PC-3 (cell line): ENCODE measurements at regions of chr11 and their contacts with region 1.

Region 1: GRCh38 chr11:94519478-94520084 is 7.3 kb downstream of the C11orf97 start:
- DNase-seq: peak; percentile 76
- ATAC-seq: peak; percentile 64
- H3K4me3 ChIP-seq: no peak overlapping the region; the same call in 1 of the 2 replicates
- H3K27ac ChIP-seq: no peak overlapping the region
- H3K4me1 ChIP-seq: no peaks in the 10 kb centered on the region
- H3K27me3 ChIP-seq: no peaks in the 10 kb centered on the region
- CTCF ChIP-seq: peak; percentile 86

Region 2: GRCh38 chr11:94417386-94417987 is 102.1 kb before region 1 on chr11:
- CTCF ChIA-PET with region 1: no interaction called
- POLR2A ChIA-PET with region 1: no interaction called
- intact Hi-C with region 1: no loop called
- DNase-seq: peak; percentile 71
- ATAC-seq: peak; percentile 73
- H3K4me3 ChIP-seq: no peak overlapping the region
- H3K27ac ChIP-seq: no peak overlapping the region
- H3K4me1 ChIP-seq: no peaks in the 10 kb centered on the region
- H3K27me3 ChIP-seq: no peaks in the 10 kb centered on the region
- CTCF ChIP-seq: peak; percentile 84

Region 3: DNA sequence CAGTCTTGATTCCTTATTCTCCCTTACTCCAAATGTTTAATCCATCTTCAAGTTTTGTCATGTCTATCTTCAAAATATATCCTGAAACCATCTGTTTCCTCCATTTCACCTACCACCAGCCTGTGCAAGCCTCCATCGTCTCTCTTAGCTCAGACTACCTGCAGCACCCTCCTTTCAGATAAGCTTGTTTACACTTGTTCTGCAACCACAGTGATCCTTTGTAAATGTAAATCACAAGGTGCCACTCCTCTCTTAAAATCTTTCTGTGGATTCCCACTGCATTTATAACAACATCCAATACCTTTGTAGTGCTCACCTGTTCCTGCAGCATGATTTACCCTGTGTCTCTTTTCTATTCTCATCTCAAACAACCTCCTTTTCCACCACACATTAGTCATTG is 86.5 kb before region 1 on chr11:
- CTCF ChIA-PET with region 1: no interaction called
- POLR2A ChIA-PET with region 1: no interaction called
- intact Hi-C with region 1: no loop called
- DNase-seq: no peak
- ATAC-seq: no peak
- H3K4me3 ChIP-seq: no peak overlapping the region
- H3K27ac ChIP-seq: no peak overlapping the region
- H3K4me1 ChIP-seq: no peaks in the 10 kb centered on the region
- H3K27me3 ChIP-seq: no peaks in the 10 kb centered on the region
- CTCF ChIP-seq: no peak

Region 4: GRCh38 chr11:94563176-94563847 is 43.7 kb after region 1 on chr11:
- CTCF ChIA-PET with region 1: no interaction called
- POLR2A ChIA-PET with region 1: no interaction called
- intact Hi-C with region 1: loop called (anchors 1 kb)
- DNase-seq: peak; percentile 76
- ATAC-seq: peak; percentile 99
- H3K4me3 ChIP-seq: no peak overlapping the region
- H3K27ac ChIP-seq: no peak overlapping the region
- H3K4me1 ChIP-seq: peaks cover 13% of the 10 kb centered on the region
- H3K27me3 ChIP-seq: no peaks in the 10 kb centered on the region
- CTCF ChIP-seq: peak; percentile 76

Region 5: GRCh38 chr11:94602430-94603372 is 83.1 kb after region 1 on chr11:
- CTCF ChIA-PET with region 1: interaction called, 3 read pairs
- POLR2A ChIA-PET with region 1: no interaction called
- intact Hi-C with region 1: loop called (anchors 1 kb)
- DNase-seq: peak; percentile 82
- ATAC-seq: peak; percentile 99
- H3K4me3 ChIP-seq: no peak overlapping the region
- H3K27ac ChIP-seq: no peak overlapping the region
- H3K4me1 ChIP-seq: no peaks in the 10 kb centered on the region
- H3K27me3 ChIP-seq: no peaks in the 10 kb centered on the region
- CTCF ChIP-seq: peak; percentile 79